Caco-2 (cell line): ENCODE measurements at regions of chr3 and their contacts with region 1.

Region 1: DNA sequence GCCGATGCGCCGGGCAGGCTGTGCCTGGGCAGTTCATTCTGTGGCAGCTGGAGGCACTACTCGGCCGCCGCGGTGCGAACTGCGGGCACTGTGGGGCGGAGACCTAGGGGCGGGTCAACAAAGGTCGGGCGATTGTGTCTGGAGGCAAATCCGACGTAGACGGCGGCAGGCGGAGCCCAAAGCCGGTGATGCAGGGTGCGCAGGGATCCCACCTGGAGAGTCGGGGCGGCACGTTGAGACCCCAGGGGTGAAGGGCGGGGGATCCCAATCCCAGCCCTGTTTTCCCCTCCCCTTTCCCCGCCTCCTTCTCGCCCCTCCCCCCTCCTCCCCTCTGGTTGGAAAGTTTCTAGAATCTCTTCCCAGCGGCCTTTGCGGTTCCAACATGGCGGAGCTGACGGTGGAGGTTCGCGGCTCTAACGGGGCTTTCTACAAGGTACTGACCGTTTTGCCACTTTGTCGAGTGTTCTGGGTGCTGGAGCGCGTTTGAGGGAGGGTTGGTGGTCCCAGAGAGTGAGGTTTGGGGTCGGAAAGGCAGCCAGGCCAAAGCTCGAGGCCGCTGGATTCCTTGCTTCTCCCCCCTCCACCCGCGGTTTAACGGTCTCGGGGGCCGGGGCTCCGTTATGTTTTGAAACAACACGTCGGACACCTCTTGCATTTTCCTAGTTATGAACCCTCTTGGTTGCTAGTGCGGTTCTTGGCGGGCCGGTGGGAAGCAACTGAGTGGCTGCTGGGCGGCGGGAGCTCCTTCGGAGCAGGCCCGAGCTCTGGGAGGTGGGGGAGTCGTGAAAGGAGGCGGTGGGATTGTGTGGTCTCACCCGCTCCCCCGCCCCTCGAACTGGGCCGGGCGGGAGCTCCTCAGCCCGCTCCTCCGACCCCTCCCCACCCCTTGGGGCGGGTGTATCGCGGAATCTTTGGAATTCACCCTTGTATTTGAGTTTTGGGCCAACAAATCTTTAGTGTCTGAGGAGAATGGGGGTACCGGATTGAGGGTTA is at the start of gene FXR1:
- DNase-seq: peak; percentile 92 to 93
- H3K4me3 ChIP-seq: peak within 1 kb of the TSS; percentile 68
- H3K4me3 Mint-ChIP-seq: peak within 1 kb of the TSS; percentile 98
- H3K27ac Mint-ChIP-seq: peak within 1 kb of the TSS; percentile 94
- H3K4me1 ChIP-seq: peaks cover 21% of the 10 kb centered on the region
- H3K4me1 Mint-ChIP-seq: no peaks in the 10 kb centered on the region
- H3K27me3 ChIP-seq: no peaks in the 10 kb centered on the region
- H3K27me3 Mint-ChIP-seq: no peaks in the 10 kb centered on the region
- CTCF ChIP-seq: peak; percentile 57 to 78
- total RNA-seq, gene FXR1: 126 and 137 TPM in 2 replicates

Region 2: GRCh38 chr3:180855364-180855763 is 57.2 kb before region 1 on chr3:
- CTCF ChIA-PET with region 1: no interaction called
- POLR2A ChIA-PET with region 1: interaction called, 10 read pairs
- intact Hi-C with region 1: no loop called
- DNase-seq: no peak
- H3K4me3 ChIP-seq: no peak overlapping the region
- H3K4me3 Mint-ChIP-seq: no peak overlapping the region
- H3K27ac Mint-ChIP-seq: no peak overlapping the region
- H3K4me1 ChIP-seq: no peaks in the 10 kb centered on the region
- H3K4me1 Mint-ChIP-seq: no peaks in the 10 kb centered on the region
- H3K27me3 ChIP-seq: no peaks in the 10 kb centered on the region; the same call in 1 of the 2 replicates
- H3K27me3 Mint-ChIP-seq: peaks cover 11% of the 10 kb centered on the region
- CTCF ChIP-seq: peak; percentile 22 to 25

Region 3: GRCh38 chr3:180989291-180990163 is 76.9 kb after region 1 on chr3 and contains the start of gene DNAJC19:
- CTCF ChIA-PET with region 1: interaction called, 3 read pairs
- POLR2A ChIA-PET with region 1: no interaction called
- intact Hi-C with region 1: loop called (anchors 1 kb)
- DNase-seq: peak; percentile 93 to 96
- H3K4me3 ChIP-seq: peak within 1 kb of the TSS; percentile 68
- H3K4me3 Mint-ChIP-seq: peak within 1 kb of the TSS; percentile 100
- H3K27ac Mint-ChIP-seq: peak within 1 kb of the TSS; percentile 99
- H3K4me1 ChIP-seq: no peaks in the 10 kb centered on the region
- H3K4me1 Mint-ChIP-seq: no peaks in the 10 kb centered on the region
- H3K27me3 ChIP-seq: no peaks in the 10 kb centered on the region
- H3K27me3 Mint-ChIP-seq: peaks cover 7% of the 10 kb centered on the region
- CTCF ChIP-seq: no peak
- total RNA-seq, gene DNAJC19: 55.4 and 71.8 TPM in 2 replicates